ENCODE measurements at regions of chr4 and their contacts with region 1.

Region 1: DNA sequence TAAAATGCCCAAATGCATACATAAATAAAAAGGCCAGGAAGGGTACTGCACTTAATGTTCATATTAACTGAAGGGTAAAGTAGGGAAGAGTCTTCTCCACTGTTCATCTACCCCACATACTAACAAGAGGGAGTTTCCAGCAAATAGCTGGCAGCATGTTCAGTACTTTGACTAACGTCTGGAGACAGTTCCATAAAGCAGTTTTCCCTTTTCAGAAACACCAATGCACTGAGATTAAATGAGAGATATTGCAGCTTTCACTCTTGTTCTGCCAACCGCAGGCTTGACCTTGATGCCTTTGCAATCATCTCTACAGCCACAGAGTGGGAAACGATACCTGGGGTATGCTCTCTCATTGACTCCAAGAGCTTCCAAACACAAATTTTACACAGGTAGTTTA is 2123.1 kb upstream of the TENM3 start:
- DNase-seq: no peak
- H3K4me3 ChIP-seq: no peak overlapping the region
- H3K4me3 Mint-ChIP-seq: no peak overlapping the region
- H3K27ac Mint-ChIP-seq: no peak overlapping the region
- H3K4me1 ChIP-seq: no peaks in the 10 kb centered on the region
- H3K4me1 Mint-ChIP-seq: peaks cover 19% of the 10 kb centered on the region
- H3K27me3 ChIP-seq: no peaks in the 10 kb centered on the region
- H3K27me3 Mint-ChIP-seq: peaks cover 8% of the 10 kb centered on the region
- CTCF ChIP-seq: no peak

Region 2: GRCh38 chr4:179817317-179817716 is 302.8 kb before region 1 on chr4:
- CTCF ChIA-PET with region 1: no interaction called
- POLR2A ChIA-PET with region 1: no interaction called
- intact Hi-C with region 1: no loop called
- DNase-seq: no peak
- H3K4me3 ChIP-seq: no peak overlapping the region
- H3K4me3 Mint-ChIP-seq: no peak overlapping the region
- H3K27ac Mint-ChIP-seq: no peak overlapping the region
- H3K4me1 ChIP-seq: no peaks in the 10 kb centered on the region
- H3K4me1 Mint-ChIP-seq: no peaks in the 10 kb centered on the region
- H3K27me3 ChIP-seq: no peaks in the 10 kb centered on the region
- H3K27me3 Mint-ChIP-seq: peaks cover 8% of the 10 kb centered on the region
- CTCF ChIP-seq: no peak

Region 3: GRCh38 chr4:180084561-180084960 is 35.5 kb before region 1 on chr4:
- CTCF ChIA-PET with region 1: no interaction called
- POLR2A ChIA-PET with region 1: no interaction called
- intact Hi-C with region 1: loop called (anchors 5 kb)
- DNase-seq: no peak
- H3K4me3 ChIP-seq: no peak overlapping the region
- H3K4me3 Mint-ChIP-seq: no peak overlapping the region
- H3K27ac Mint-ChIP-seq: no peak overlapping the region
- H3K4me1 ChIP-seq: peaks cover 22% of the 10 kb centered on the region
- H3K4me1 Mint-ChIP-seq: peaks cover 5% of the 10 kb centered on the region
- H3K27me3 ChIP-seq: no peaks in the 10 kb centered on the region
- H3K27me3 Mint-ChIP-seq: no peaks in the 10 kb centered on the region
- CTCF ChIP-seq: no peak

Measured in Caco-2 (cell line).